ENCODE measurements at regions of chr20 and their contacts with region 1.

Region 1: DNA sequence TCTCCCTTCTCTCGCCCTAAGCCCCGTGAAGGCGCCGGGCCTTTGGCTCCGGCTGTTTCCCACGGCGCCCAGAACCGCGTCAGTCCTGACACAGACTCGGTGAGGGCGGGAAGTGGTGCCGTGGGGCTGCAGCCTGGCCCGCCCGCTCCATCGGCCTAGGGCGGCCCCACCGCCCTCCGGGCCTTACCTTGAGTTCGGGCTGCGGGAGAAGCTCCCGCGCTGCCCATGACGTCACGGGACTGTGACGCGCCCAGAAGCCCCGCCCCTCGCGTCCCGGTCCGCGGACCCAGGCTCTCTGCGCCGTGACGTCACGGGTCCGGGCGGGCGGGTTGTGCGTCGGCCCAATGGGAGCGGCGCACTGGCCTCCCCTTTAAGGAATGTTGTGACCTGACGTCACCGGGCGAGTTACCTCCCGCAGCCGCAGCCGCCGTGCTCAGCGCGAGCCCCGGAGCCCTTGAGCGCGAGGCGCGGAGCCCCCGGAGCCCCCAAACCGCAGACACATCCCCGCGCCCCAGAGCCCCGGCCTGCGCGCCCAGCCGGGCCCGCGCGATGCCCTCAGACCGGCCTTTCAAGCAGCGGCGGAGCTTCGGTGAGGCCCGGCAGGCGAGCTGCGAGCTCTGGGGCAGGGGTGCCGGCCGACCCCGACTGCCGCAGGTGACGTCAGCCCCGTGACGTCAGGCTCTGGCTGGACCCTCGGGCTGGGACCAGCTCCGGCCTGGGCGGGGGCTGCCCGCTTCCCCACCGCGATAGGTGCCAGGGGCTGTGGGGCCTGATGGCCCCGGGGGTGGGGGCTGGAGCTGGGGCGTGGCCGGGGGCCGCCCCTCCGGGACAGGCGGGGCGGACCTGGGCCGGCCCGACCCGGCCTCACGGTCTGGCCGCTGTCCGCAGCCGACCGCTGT is at the start of gene MAP1LC3A:
- DNase-seq: peak; percentile 94
- CTCF ChIP-seq: no peak

Region 2: GRCh38 chr20:34493646-34494045 is 64.9 kb before region 1 on chr20:
- CTCF ChIA-PET with region 1: no interaction called
- POLR2A ChIA-PET with region 1: no interaction called
- DNase-seq: no peak
- CTCF ChIP-seq: no peak

Region 3: GRCh38 chr20:34506480-34506879 is 52.1 kb before region 1 on chr20:
- CTCF ChIA-PET with region 1: no interaction called
- POLR2A ChIA-PET with region 1: no interaction called
- DNase-seq: no peak
- CTCF ChIP-seq: no peak

Region 4: GRCh38 chr20:34570859-34571306 is 12.3 kb after region 1 on chr20:
- CTCF ChIA-PET with region 1: interaction called, 11 read pairs
- POLR2A ChIA-PET with region 1: interaction called, 3 read pairs
- DNase-seq: no peak
- CTCF ChIP-seq: no peak

Region 5: DNA sequence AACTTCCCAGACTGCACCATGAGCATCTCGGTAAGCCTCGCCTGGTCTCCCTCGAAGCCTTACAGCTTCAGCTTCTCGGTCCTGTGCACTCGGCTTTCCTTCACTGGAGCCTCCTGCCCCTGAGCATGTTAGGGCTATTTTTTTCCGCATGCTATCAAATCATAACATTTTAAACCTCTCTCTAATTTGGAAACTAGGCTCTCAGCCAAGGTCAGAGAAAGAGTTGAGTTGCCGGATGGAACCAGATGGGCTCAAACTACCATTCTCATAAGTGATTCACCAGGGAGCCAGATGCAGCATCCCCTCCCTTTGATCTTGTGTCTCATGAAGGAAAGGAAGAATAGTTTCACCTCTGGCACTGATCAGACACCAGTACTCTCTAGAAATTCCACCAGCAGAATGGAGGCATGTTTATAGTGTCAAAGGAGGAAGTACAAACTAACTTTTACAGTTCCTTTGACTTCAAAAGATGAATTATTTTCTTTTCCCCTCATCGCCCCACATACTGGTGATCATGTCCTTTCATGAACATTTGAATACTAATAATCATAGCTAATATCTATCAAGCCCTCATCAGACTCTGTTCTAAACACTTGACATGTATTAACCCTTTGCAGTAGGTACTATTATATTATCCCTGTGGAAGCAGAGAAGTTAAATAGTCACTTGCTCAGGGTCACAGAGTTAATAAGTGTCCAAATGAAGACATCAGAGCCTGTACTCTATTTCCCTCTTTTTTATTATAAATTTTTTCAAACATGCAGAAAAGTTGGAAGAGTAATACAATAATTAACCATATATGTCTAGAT is 46.6 kb after region 1 on chr20:
- CTCF ChIA-PET with region 1: no interaction called
- POLR2A ChIA-PET with region 1: no interaction called
- DNase-seq: no peak
- CTCF ChIP-seq: no peak

Region 6: GRCh38 chr20:35277531-35278395 is 719.2 kb after region 1 on chr20 and contains the start of gene MMP24OS:
- CTCF ChIA-PET with region 1: no interaction called
- POLR2A ChIA-PET with region 1: interaction called, 10 read pairs
- DNase-seq: peak; percentile 96
- CTCF ChIP-seq: peak; percentile 64

Measured in GM10248 (cell line).